Calu3 (cell line): ENCODE measurements at regions of chr19 and their contacts with region 1.

Region 1: GRCh38 chr19:33430674-33431277 is 57.3 kb downstream of the CEBPG start:
- DNase-seq: peak; percentile 86
- H3K4me3 Mint-ChIP-seq: no peak overlapping the region
- H3K27ac Mint-ChIP-seq: no peak overlapping the region
- H3K4me1 Mint-ChIP-seq: no peaks in the 10 kb centered on the region
- H3K27me3 Mint-ChIP-seq: peaks cover 25% of the 10 kb centered on the region
- CTCF ChIP-seq: peak; percentile 91

Region 2: GRCh38 chr19:33394006-33394849 is 36.5 kb before region 1 on chr19:
- CTCF ChIA-PET with region 1: no interaction called
- intact Hi-C with region 1: no loop called
- DNase-seq: no peak
- H3K4me3 Mint-ChIP-seq: no peak overlapping the region
- H3K27ac Mint-ChIP-seq: no peak overlapping the region
- H3K4me1 Mint-ChIP-seq: no peaks in the 10 kb centered on the region
- H3K27me3 Mint-ChIP-seq: no peaks in the 10 kb centered on the region
- CTCF ChIP-seq: no peak

Region 3: GRCh38 chr19:33416307-33417215 is 14.2 kb before region 1 on chr19:
- CTCF ChIA-PET with region 1: interaction called, 16 read pairs
- intact Hi-C with region 1: no loop called
- DNase-seq: peak; percentile 87
- H3K4me3 Mint-ChIP-seq: no peak overlapping the region
- H3K27ac Mint-ChIP-seq: no peak overlapping the region
- H3K4me1 Mint-ChIP-seq: peaks cover 8% of the 10 kb centered on the region
- H3K27me3 Mint-ChIP-seq: no peaks in the 10 kb centered on the region
- CTCF ChIP-seq: peak; percentile 85

Region 4: DNA sequence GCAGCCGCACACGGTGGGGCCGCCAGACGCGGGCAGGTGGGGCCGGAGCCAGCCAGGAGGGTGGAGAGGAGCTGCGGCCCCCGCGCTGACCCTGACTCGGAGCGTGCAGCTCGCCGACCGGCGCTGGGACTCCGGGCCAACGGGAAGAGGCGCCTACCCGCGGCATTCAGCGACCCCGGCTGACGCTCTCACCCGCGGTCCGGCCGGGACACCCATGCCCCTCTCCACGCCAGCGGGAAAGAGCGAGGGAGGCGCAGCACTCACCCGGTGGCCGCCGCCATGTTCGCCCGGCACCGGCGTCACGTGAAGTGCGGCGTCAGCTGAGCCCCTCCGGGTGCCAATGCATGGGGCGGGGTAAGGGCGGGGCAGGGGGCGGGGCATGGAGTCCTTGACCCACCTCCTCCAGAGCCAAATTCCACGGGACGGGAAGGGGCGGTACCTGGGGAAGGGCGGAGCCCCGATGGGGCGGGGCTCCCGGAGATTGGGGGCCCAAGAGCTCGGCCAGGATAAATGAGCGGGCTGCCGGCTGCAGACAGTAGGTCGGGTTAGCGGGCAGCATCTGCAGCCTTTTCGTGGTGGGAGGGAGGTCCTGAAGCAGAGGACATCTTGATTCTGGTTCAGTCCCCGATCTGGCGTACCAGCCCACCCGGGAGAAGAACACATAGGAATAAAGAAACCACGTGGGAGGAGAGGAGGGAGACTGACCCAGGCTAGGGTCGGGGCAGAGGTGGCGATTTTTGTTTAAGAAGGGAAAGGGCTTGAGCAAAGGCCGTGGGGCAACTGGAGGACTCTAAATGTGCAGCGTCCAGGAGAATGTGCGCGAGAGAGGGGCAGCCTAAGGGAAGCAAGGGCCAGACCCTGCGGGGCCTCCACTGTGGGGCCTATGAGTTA is 90.9 kb after region 1 on chr19 and contains the start of gene PEPD:
- CTCF ChIA-PET with region 1: interaction called, 5 read pairs
- intact Hi-C with region 1: loop called (anchors 10 kb)
- DNase-seq: peak; percentile 90
- H3K4me3 Mint-ChIP-seq: peak within 1 kb of the TSS; percentile 77
- H3K27ac Mint-ChIP-seq: peak within 1 kb of the TSS; percentile 51
- H3K4me1 Mint-ChIP-seq: peaks cover 20% of the 10 kb centered on the region
- H3K27me3 Mint-ChIP-seq: peaks cover 62% of the 10 kb centered on the region
- CTCF ChIP-seq: no peak
- total RNA-seq, gene PEPD: 55.1 and 65.5 TPM in 2 replicates

Region 5: DNA sequence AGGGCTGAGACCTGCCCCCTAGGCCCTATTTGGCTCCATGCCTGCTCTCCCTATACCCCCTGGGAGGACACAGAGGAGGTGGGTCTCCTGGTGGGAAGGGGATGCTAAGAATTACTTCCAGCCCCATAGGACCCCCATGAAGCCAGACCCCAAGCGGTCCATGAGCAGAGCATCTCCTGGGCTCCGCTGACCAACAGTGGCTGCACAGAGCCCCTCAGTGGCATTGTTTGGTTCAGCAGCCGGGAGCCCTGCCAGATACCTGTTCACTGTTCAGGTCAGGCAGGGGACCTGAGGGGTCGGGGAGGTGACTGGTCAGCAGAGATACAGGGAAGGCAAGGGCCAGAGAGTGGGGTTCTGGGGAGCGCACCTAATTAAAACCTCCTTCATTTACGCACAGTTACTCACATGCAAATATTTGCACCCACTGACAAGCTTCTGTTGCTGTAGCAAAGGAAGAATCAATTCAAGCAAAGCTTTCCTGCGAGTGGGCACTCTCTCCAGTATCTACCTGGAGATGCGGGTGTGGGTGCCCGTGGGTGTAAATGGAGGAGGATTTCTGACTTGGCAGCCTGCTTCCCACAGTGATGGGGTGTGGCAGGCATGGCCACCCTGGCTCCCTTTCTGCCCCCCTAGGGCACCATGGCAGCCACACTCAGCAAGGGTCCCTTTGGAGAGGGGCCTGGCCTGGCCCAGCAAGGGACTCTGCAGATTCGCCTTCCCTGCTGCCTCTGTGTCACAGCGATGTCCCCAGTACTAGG is 274.5 kb after region 1 on chr19:
- CTCF ChIA-PET with region 1: no interaction called
- intact Hi-C with region 1: loop called (anchors 1 kb)
- DNase-seq: no peak
- H3K4me3 Mint-ChIP-seq: no peak overlapping the region
- H3K27ac Mint-ChIP-seq: no peak overlapping the region
- H3K4me1 Mint-ChIP-seq: no peaks in the 10 kb centered on the region
- H3K27me3 Mint-ChIP-seq: peaks cover 85% of the 10 kb centered on the region
- CTCF ChIP-seq: no peak

Region 6: DNA sequence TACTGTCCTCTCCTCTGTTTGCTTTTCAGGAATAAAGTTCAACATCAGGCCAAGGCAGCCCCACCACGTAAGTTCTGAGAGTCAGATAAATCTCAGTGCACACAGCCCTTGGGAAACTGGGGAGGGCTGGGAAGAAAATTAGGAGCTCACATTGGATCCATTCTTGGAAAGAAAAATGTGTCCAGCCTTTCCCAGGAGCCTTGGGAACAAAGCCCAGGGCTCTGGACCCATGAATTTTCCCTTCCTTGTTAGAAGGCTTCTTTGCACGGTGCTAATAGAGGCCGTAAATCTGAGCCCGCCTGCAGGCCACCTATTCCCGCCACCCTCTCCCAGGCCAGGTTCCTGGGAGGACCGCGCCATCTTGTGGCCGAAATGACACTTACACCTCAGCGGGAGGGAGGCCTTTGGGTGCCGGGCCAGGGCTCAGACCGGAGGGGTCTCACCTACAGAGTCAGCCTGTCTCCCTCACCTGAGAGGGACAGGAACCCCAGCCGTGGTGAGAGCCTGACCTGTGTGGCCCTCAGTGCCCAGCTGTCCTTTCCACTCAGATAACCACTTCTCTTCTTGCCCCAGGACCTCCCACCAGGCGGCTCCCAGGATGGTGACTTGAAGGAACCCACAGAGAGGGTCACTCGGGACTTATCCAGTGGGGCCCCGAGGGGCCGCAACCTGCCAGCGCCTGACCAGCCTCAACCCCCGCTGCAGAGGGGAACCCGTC is 340.8 kb after region 1 on chr19:
- CTCF ChIA-PET with region 1: interaction called, 49 read pairs
- intact Hi-C with region 1: loop called (anchors 1 kb)
- DNase-seq: peak; percentile 88
- H3K4me3 Mint-ChIP-seq: no peak overlapping the region
- H3K27ac Mint-ChIP-seq: no peak overlapping the region
- H3K4me1 Mint-ChIP-seq: no peaks in the 10 kb centered on the region
- H3K27me3 Mint-ChIP-seq: peaks cover 81% of the 10 kb centered on the region
- CTCF ChIP-seq: peak; percentile 90